CD4-positive, alpha-beta T cell (primary cell): ENCODE measurements at regions of chr16 and their contacts with region 1.

Region 1: GRCh38 chr16:30429678-30430427 is at the start of gene DCTPP1:
- DNase-seq: peak; percentile 89 to 99 (median 93)
- ATAC-seq: peak; percentile 96
- H3K4me3 ChIP-seq: peak within 1 kb of the TSS; percentile 97
- H3K4me3 Mint-ChIP-seq: no peak within 1 kb of the TSS
- H3K27ac ChIP-seq: peak within 1 kb of the TSS; percentile 70 to 81
- H3K27ac Mint-ChIP-seq: no peak within 1 kb of the TSS
- H3K4me1 ChIP-seq: peaks cover 38% of the 10 kb centered on the region
- H3K4me1 Mint-ChIP-seq: peaks cover 21% of the 10 kb centered on the region
- H3K27me3 ChIP-seq: no peaks in the 10 kb centered on the region
- H3K27me3 Mint-ChIP-seq: no peaks in the 10 kb centered on the region
- CTCF ChIP-seq: peak; percentile 75
- total RNA-seq, gene DCTPP1: 5.4 to 6.5 TPM

Region 2: GRCh38 chr16:30032083-30032819 is 397.6 kb before region 1 on chr16:
- CTCF ChIA-PET with region 1: no interaction called
- POLR2A ChIA-PET with region 1: no interaction called
- intact Hi-C with region 1: no loop called
- DNase-seq: peak; percentile 43 to 83 (median 52)
- ATAC-seq: peak; percentile 74
- H3K4me3 ChIP-seq: no peak overlapping the region
- H3K4me3 Mint-ChIP-seq: peak overlapping the region; percentile 39
- H3K27ac ChIP-seq: no peak overlapping the region
- H3K27ac Mint-ChIP-seq: no peak overlapping the region
- H3K4me1 ChIP-seq: peaks cover 28% of the 10 kb centered on the region
- H3K4me1 Mint-ChIP-seq: peaks cover 14% of the 10 kb centered on the region
- H3K27me3 ChIP-seq: peaks cover 42 to 49% of the 10 kb centered on the region in 2 experiments
- H3K27me3 Mint-ChIP-seq: peaks cover 57% of the 10 kb centered on the region
- CTCF ChIP-seq: peak; percentile 74

Region 3: GRCh38 chr16:30407102-30407803 is 22.6 kb before region 1 on chr16 and contains the start of gene ZNF771:
- CTCF ChIA-PET with region 1: interaction called, 13 read pairs
- POLR2A ChIA-PET with region 1: interaction called, 8 read pairs
- intact Hi-C with region 1: no loop called
- DNase-seq: peak; percentile 68 to 96 (median 86)
- ATAC-seq: peak; percentile 71
- H3K4me3 ChIP-seq: peak within 1 kb of the TSS; percentile 69
- H3K4me3 Mint-ChIP-seq: peak within 1 kb of the TSS; percentile 97
- H3K27ac ChIP-seq: peak within 1 kb of the TSS; percentile 66 to 67
- H3K27ac Mint-ChIP-seq: peak within 1 kb of the TSS; percentile 79
- H3K4me1 ChIP-seq: peaks cover 31% of the 10 kb centered on the region
- H3K4me1 Mint-ChIP-seq: peaks cover 21% of the 10 kb centered on the region
- H3K27me3 ChIP-seq: no peaks in the 10 kb centered on the region
- H3K27me3 Mint-ChIP-seq: no peaks in the 10 kb centered on the region
- CTCF ChIP-seq: no peak
- total RNA-seq, gene ZNF771: 0.80 to 1.2 TPM

Region 4: DNA sequence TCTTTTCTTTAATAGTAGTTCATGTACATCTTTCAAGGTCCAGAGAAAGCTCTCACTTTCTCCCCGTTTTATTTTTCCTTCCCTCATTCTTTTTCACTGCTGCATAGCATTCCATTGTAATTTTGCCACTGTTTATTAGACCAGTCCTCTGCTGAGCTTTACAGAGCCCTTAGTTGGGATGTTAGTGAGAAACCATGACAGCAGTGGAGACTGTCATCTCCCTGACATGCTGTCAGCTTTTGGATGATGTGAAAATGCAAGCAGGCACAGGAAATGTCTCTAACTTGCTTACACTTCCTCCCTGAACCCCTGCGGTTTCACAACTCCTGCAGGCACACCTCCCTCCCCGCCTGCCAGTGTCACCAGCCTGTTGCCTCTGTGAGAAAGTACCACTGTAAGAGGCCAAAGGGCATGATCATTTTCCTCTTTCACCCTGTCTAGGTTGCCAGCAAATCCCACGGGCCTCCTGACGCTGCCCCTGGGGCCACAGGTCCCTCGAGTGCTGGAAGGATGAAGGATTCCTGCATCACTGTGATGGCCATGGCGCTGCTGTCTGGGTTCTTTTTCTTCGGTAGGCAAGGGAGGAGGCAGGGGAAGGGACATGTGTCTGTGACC is 42.6 kb after region 1 on chr16 and contains the start of gene ITGAL:
- CTCF ChIA-PET with region 1: interaction called, 10 read pairs
- POLR2A ChIA-PET with region 1: interaction called, 37 read pairs
- intact Hi-C with region 1: loop called (anchors 1 to 5 kb)
- DNase-seq: peak; percentile 63 to 96 (median 80)
- ATAC-seq: peak; percentile 83
- H3K4me3 ChIP-seq: peak within 1 kb of the TSS; percentile 83
- H3K4me3 Mint-ChIP-seq: peak within 1 kb of the TSS; percentile 96
- H3K27ac ChIP-seq: peak within 1 kb of the TSS; percentile 75 to 94
- H3K27ac Mint-ChIP-seq: peak within 1 kb of the TSS; percentile 90
- H3K4me1 ChIP-seq: peaks cover 81% of the 10 kb centered on the region
- H3K4me1 Mint-ChIP-seq: peaks cover 70% of the 10 kb centered on the region
- H3K27me3 ChIP-seq: no peaks in the 10 kb centered on the region
- H3K27me3 Mint-ChIP-seq: no peaks in the 10 kb centered on the region
- CTCF ChIP-seq: no peak
- total RNA-seq, gene ITGAL: 186 to 187 TPM

Region 5: GRCh38 chr16:30571695-30572600 is 142.1 kb after region 1 on chr16 and contains the start of gene ZNF688:
- CTCF ChIA-PET with region 1: interaction called, 13 read pairs
- POLR2A ChIA-PET with region 1: interaction called, 30 read pairs
- intact Hi-C with region 1: no loop called
- DNase-seq: peak; percentile 87 to 99 (median 92)
- ATAC-seq: peak; percentile 79
- H3K4me3 ChIP-seq: peak within 1 kb of the TSS; percentile 94
- H3K4me3 Mint-ChIP-seq: peak within 1 kb of the TSS; percentile 98
- H3K27ac ChIP-seq: peak within 1 kb of the TSS; percentile 90 to 96
- H3K27ac Mint-ChIP-seq: peak within 1 kb of the TSS; percentile 97
- H3K4me1 ChIP-seq: peaks cover 51% of the 10 kb centered on the region
- H3K4me1 Mint-ChIP-seq: peaks cover 42% of the 10 kb centered on the region
- H3K27me3 ChIP-seq: no peaks in the 10 kb centered on the region
- H3K27me3 Mint-ChIP-seq: no peaks in the 10 kb centered on the region
- CTCF ChIP-seq: no peak
- total RNA-seq, gene ZNF688: 8.8 to 9.6 TPM

Region 6: GRCh38 chr16:30628627-30629540 is 199.0 kb after region 1 on chr16:
- CTCF ChIA-PET with region 1: interaction called, 7 read pairs
- POLR2A ChIA-PET with region 1: interaction called, 3 read pairs
- intact Hi-C with region 1: loop called (anchors 1 to 2 kb)
- DNase-seq: peak; percentile 78 to 93 (median 87)
- ATAC-seq: peak; percentile 99
- H3K4me3 ChIP-seq: peak overlapping the region; percentile 29
- H3K4me3 Mint-ChIP-seq: peak overlapping the region; percentile 59
- H3K27ac ChIP-seq: no peak overlapping the region
- H3K27ac Mint-ChIP-seq: peak overlapping the region; percentile 71
- H3K4me1 ChIP-seq: peaks cover 13% of the 10 kb centered on the region
- H3K4me1 Mint-ChIP-seq: peaks cover 9% of the 10 kb centered on the region
- H3K27me3 ChIP-seq: no peaks in the 10 kb centered on the region
- H3K27me3 Mint-ChIP-seq: no peaks in the 10 kb centered on the region
- CTCF ChIP-seq: peak; percentile 90

Region 7: DNA sequence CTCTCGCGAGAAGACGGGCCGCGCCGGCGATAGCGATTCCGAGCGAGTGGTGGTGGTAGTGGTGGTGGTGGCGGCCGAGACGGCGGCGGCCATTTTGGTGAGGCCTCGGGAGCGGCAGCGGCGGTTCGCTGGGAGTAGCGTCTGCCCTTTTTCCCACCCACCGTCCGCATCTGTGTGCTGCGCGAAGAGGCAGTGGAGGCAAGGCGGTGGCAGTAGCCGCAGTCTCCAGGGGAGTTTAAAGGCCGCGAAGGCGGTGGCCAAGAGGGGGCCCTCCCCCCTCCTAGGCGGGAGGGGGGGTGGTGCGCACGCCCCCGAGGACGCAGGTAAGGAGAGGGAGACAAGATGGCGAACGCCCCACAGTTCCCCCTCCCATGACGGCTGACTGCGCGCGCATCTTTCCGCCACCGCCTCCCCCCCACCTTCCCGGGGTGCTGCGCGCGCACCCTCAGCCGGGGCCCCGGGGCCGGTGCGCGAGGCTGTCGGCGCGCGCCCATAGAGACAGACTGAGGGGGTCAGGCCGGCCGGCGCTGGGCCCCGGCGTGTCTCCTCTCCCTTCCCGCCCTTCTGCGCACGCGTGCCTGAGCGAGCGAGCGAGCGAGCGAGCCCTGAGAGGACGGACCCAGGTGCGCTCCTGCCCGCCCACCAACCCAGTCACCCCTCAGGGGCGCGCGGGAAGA is 268.4 kb after region 1 on chr16:
- CTCF ChIA-PET with region 1: interaction called, 5 read pairs
- POLR2A ChIA-PET with region 1: interaction called, 10 read pairs
- intact Hi-C with region 1: loop called in 1 of 2 experiments (anchors 10 kb)
- DNase-seq: peak; percentile 97 to 100 (median 99)
- ATAC-seq: peak; percentile 75
- H3K4me3 ChIP-seq: peak overlapping the region; percentile 97
- H3K4me3 Mint-ChIP-seq: peak overlapping the region; percentile 98
- H3K27ac ChIP-seq: peak overlapping the region; percentile 100
- H3K27ac Mint-ChIP-seq: peak overlapping the region; percentile 100
- H3K4me1 ChIP-seq: peaks cover 38% of the 10 kb centered on the region
- H3K4me1 Mint-ChIP-seq: peaks cover 37% of the 10 kb centered on the region
- H3K27me3 ChIP-seq: no peaks in the 10 kb centered on the region
- H3K27me3 Mint-ChIP-seq: no peaks in the 10 kb centered on the region
- CTCF ChIP-seq: no peak